Prostate gland (tissue), 2 donors: ENCODE measurements at regions of chr2 and their contacts with region 1.

Region 1: DNA sequence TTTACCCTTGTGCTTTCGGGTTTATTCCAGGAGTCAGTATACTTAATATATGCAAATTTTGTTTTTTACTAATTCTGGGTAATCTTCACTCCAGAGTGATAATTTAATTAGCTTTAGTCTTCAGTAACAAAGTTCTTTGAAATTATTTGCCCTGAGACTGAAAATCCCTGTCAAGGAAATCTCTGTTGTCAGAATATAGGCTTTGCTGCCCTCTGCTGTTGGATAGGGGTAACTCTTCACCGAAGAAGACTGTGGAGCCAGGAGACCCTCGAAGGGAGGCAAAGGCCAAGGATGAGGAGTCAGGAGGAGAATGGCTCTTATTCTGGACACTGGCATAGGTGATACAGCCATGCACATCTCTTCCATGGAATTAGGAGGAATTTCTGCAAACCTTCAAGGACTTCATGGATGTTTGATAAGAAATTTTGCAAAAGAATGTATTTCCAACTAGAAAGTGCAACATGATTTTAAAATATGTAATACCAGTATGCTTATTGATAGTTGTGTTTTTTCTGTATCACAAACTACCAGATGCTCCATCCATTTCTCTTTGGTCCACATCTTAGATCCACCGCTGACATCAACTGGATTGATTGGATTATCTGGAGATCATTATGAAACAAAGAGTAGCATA is 182.3 kb downstream of the RDH14 start:
- DNase-seq: peak; percentile 23
- H3K4me3 ChIP-seq: no peak overlapping the region
- H3K27ac ChIP-seq: no peak overlapping the region
- H3K4me1 ChIP-seq: no peaks in the 10 kb centered on the region
- H3K27me3 ChIP-seq: no peaks in the 10 kb centered on the region
- CTCF ChIP-seq: peak; percentile 32 to 75 (median 70)
- POLR2A ChIP-seq: no peak

Region 2: DNA sequence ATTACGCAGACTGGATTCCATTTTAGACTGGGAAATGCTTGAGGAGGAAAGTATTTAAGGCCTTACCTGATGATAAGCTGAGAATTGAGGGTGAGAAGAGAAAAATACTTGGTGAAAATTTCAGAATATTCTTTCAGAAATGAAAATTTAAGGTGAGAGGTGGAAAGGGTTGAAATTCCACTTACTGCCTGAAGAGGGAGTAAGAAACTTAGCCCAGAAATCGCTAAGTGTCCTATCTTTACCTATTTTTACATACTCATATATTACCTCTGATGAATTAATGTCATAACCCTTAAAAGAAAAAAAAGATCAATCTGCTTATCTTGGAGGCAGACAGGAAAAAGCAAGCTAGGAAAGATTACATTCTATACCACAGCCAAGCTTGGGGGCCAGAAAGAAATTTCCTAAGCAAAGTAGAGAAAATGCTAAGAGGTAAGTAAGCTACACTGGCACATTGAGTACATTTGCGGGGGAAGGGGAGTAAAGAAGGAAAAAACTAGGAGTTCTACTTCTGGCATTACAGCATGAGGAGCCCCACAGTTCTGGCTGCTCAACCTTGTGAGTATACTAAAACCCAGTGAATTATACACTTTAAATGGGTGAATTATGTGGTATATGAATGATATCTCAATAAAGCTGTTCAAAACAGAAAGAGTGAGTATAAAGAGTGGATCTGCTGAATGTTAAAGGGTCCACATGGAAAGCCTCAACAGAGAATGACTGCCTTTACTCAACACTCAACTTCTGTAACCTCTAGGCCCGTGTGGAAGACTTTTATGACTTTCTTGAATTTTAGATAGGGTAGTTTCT is 658.4 kb before region 1 on chr2:
- intact Hi-C with region 1: loop called (anchors 10 kb)
- DNase-seq: no peak
- H3K4me3 ChIP-seq: no peak overlapping the region
- H3K27ac ChIP-seq: no peak overlapping the region
- H3K4me1 ChIP-seq: no peaks in the 10 kb centered on the region
- H3K27me3 ChIP-seq: no peaks in the 10 kb centered on the region
- CTCF ChIP-seq: peak; percentile 48 to 84 (median 66)
- POLR2A ChIP-seq: no peak

Region 3: GRCh38 chr2:17851731-17852585 is 526.2 kb before region 1 on chr2:
- intact Hi-C with region 1: loop called (anchors 5 kb)
- DNase-seq: peak; percentile 38
- H3K4me3 ChIP-seq: no peak overlapping the region
- H3K27ac ChIP-seq: no peak overlapping the region
- H3K4me1 ChIP-seq: no peaks in the 10 kb centered on the region
- H3K27me3 ChIP-seq: no peaks in the 10 kb centered on the region
- CTCF ChIP-seq: peak; percentile 22 to 88 (median 77)
- POLR2A ChIP-seq: no peak

Region 4: GRCh38 chr2:18186816-18187613 is 191.1 kb before region 1 on chr2:
- intact Hi-C with region 1: loop called (anchors 10 kb)
- DNase-seq: no peak
- H3K4me3 ChIP-seq: no peak overlapping the region
- H3K27ac ChIP-seq: no peak overlapping the region
- H3K4me1 ChIP-seq: no peaks in the 10 kb centered on the region
- H3K27me3 ChIP-seq: no peaks in the 10 kb centered on the region
- CTCF ChIP-seq: no peak
- POLR2A ChIP-seq: no peak

Region 5: GRCh38 chr2:18690342-18690741 is 312.2 kb after region 1 on chr2:
- intact Hi-C with region 1: no loop called
- DNase-seq: no peak
- H3K4me3 ChIP-seq: no peak overlapping the region
- H3K27ac ChIP-seq: no peak overlapping the region
- H3K4me1 ChIP-seq: no peaks in the 10 kb centered on the region
- H3K27me3 ChIP-seq: no peaks in the 10 kb centered on the region
- CTCF ChIP-seq: no peak
- POLR2A ChIP-seq: no peak

Region 6: GRCh38 chr2:18845854-18846445 is 467.8 kb after region 1 on chr2:
- intact Hi-C with region 1: no loop called
- DNase-seq: no peak
- H3K4me3 ChIP-seq: no peak overlapping the region
- H3K27ac ChIP-seq: no peak overlapping the region
- H3K4me1 ChIP-seq: no peaks in the 10 kb centered on the region
- H3K27me3 ChIP-seq: no peaks in the 10 kb centered on the region
- CTCF ChIP-seq: no peak
- POLR2A ChIP-seq: no peak